ENCODE measurements at regions of chr16 and their contacts with region 1.

Region 1: GRCh38 chr16:71484006-71484893 is 4.9 kb downstream of the ZNF19 start:
- H3K4me3 ChIP-seq: peak overlapping the region; percentile 59
- H3K27ac ChIP-seq: peak overlapping the region; percentile 58; the same call in 1 of the 2 replicates
- H3K4me1 ChIP-seq: no peaks in the 10 kb centered on the region
- CTCF ChIP-seq: no peak

Region 2: GRCh38 chr16:71367241-71367976 is 116.8 kb before region 1 on chr16:
- CTCF ChIA-PET with region 1: no interaction called
- POLR2A ChIA-PET with region 1: no interaction called
- H3K4me3 ChIP-seq: no peak overlapping the region
- H3K27ac ChIP-seq: no peak overlapping the region
- H3K4me1 ChIP-seq: no peaks in the 10 kb centered on the region
- CTCF ChIP-seq: peak; percentile 78

Region 3: DNA sequence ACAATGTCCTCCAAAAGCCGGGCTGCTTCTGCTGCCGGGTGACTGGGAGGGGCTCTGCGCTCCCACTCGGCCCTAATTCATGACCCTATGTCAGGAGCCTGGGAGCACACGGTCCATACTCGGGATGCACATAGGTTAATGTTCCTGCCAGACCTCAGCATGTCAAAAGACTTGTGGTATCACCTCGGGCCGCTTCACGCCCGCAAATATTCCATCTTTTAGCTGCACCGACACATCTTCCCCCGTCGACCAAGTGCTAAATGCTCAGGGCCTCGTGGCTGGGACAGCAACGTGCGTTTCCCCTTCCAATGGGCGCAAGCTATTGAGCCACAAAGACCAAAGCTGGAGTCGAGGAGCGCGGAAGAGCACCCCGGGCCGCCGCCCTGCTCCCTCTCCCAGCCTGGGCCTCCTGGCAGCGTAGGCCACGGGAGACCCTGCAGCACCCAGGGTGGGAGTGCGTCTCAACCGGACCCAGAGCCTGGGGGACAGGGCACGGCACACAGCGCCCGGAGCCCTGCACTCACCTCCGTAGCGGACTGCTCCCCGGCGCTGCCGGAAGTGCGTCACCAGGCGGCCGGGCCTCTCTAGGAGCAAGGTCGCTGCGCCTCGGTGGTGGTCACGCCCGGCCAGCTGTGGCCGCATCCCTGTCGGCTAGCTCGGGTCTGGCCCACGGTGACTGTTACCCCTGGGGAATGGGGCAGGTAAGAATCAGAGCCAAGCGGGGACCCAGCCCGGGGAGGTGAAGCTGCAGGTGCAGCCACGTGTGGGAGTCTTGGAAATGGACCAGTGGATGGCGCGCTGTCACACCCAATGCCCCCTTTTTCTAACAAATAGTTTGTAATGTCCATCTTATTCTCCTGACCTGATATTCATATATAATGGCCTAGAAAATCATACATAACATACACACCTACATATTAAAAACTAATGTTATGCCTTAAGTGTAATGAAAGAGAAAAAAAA is 22.3 kb before region 1 on chr16 and contains the start of gene ZNF23:
- CTCF ChIA-PET with region 1: interaction called, 9 read pairs
- POLR2A ChIA-PET with region 1: interaction called, 16 read pairs
- H3K4me3 ChIP-seq: peak within 1 kb of the TSS; percentile 92
- H3K27ac ChIP-seq: no peak within 1 kb of the TSS; the same call in 1 of the 2 replicates
- H3K4me1 ChIP-seq: peaks cover 7% of the 10 kb centered on the region; the same call in 1 of the 2 replicates
- CTCF ChIP-seq: peak; percentile 55

Region 4: GRCh38 chr16:71467810-71468209 is 16.4 kb before region 1 on chr16:
- CTCF ChIA-PET with region 1: interaction called, 13 read pairs
- POLR2A ChIA-PET with region 1: interaction called, 16 read pairs
- H3K4me3 ChIP-seq: no peak overlapping the region
- H3K27ac ChIP-seq: no peak overlapping the region
- H3K4me1 ChIP-seq: no peaks in the 10 kb centered on the region
- CTCF ChIP-seq: no peak

Region 5: DNA sequence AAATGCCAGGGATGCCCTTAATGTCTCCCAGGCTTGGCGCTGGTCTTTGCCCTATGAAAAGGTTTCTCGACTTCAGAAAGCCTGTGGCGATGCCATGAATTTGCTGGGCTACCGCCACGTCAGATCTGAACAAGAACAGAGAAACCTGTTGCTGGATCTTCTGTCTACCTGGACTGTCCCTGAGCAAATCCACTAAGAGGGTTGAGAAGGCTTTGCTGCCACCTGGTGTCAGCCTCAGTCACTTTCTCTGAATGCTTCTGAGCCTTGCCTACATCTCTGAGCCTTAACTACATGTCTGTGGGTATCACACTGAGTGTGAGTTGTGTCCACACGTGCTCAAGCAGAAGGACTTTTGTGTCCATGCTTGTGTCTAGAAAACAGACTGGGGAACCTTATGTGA is 53.4 kb after region 1 on chr16:
- CTCF ChIA-PET with region 1: interaction called, 12 read pairs
- POLR2A ChIA-PET with region 1: no interaction called
- H3K4me3 ChIP-seq: no peak overlapping the region
- H3K27ac ChIP-seq: no peak overlapping the region
- H3K4me1 ChIP-seq: no peaks in the 10 kb centered on the region
- CTCF ChIP-seq: peak; percentile 53; the same call in 1 of the 2 replicates

Region 6: GRCh38 chr16:73233846-73234424 is 1749.7 kb after region 1 on chr16:
- CTCF ChIA-PET with region 1: no interaction called
- POLR2A ChIA-PET with region 1: no interaction called
- H3K4me3 ChIP-seq: no peak overlapping the region
- H3K27ac ChIP-seq: no peak overlapping the region
- H3K4me1 ChIP-seq: peaks cover 4% of the 10 kb centered on the region
- CTCF ChIP-seq: no peak

Measured in HEK293 (cell line).